ENCODE measurements at regions of chr5 and their contacts with region 1.

Region 1: DNA sequence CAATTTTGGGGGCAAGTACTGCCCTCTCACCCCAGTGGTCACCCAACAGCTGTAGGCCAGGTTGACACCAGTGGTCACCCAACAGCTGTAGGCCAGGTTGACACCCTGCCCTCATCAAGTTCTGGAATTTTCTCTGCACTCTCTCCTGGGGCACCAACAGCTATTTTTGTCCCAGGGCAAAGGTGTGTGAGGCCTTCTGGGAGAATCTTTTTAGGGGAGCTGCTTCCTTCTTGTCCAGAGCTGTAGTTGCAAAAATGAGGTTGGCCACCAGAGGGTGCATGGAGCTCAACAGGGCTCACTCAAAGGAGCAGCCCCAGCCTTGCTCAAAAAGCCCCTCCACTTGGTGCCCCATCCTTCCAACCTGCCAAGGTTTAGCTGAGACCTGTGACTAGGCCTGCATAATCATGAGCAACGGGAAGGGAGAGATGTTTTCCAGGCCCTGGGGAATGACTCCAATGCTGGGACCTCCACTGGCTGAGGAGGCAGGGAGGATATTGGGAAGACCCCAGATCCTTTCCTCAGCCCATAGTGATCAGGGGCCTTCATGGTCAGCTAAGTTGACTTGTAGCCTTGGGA is 10.6 kb upstream of the P4HA2 start:
- DNase-seq: peak in 1 of 2 experiments; percentile 95
- H3K4me3 ChIP-seq: no peak overlapping the region
- H3K27ac ChIP-seq: no peak overlapping the region
- H3K4me1 ChIP-seq: no peaks in the 10 kb centered on the region
- H3K27me3 ChIP-seq: no peaks in the 10 kb centered on the region
- CTCF ChIP-seq: peak; percentile 64 to 85 (median 75)
- EP300 ChIP-seq: no peak
- POLR2A ChIP-seq: no peak
- RAD21 ChIP-seq: peak; percentile 76 to 83

Region 2: DNA sequence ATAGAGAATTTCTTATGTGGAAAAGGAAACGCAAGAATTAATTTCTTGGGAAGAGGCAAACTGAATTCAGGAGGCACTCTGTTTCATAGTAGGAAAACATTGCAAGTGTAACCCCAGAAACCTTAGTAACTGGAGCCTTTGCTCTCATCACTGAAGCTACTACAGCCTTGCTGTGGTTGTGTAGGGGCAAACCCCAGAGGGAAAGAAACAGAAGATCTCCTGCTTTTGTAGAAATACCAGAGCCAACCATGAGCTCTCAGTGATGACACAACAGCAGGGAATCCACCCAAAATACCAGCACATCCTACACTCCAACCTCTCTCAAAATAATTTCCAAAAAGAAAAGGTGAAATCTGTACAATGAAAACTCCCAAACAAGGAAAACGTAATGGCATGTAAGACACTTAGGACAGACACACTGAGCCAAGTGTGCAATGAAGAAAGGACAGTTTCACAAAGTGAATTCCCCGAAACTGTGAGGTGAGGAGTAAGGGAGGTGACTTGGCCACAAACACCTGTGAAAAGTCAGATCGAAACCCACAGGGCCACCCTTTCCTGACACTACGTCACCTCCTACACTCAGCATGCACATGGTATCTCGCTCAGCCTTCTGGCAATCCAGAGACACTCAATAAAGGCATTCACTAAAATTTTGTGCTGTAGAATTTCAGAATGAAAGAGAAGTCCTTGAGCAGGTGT is 218.3 kb before region 1 on chr5:
- CTCF ChIA-PET with region 1: no interaction called
- POLR2A ChIA-PET with region 1: no interaction called
- DNase-seq: no peak
- H3K4me3 ChIP-seq: no peak overlapping the region
- H3K27ac ChIP-seq: no peak overlapping the region
- H3K4me1 ChIP-seq: no peaks in the 10 kb centered on the region
- H3K27me3 ChIP-seq: no peaks in the 10 kb centered on the region
- CTCF ChIP-seq: no peak
- EP300 ChIP-seq: no peak
- POLR2A ChIP-seq: no peak
- RAD21 ChIP-seq: no peak

Region 3: GRCh38 chr5:132064738-132065331 is 173.4 kb before region 1 on chr5:
- CTCF ChIA-PET with region 1: interaction called, 35 read pairs
- POLR2A ChIA-PET with region 1: no interaction called
- DNase-seq: peak; percentile 65 to 97
- H3K4me3 ChIP-seq: no peak overlapping the region
- H3K27ac ChIP-seq: no peak overlapping the region
- H3K4me1 ChIP-seq: no peaks in the 10 kb centered on the region; a peak in 1 of 7 replicates
- H3K27me3 ChIP-seq: no peaks in the 10 kb centered on the region
- CTCF ChIP-seq: peak in 2 of 3 experiments; percentile 88 to 98; a peak in 3 of 4 replicates
- EP300 ChIP-seq: no peak
- POLR2A ChIP-seq: no peak
- RAD21 ChIP-seq: peak; percentile 73 to 80

Region 4: GRCh38 chr5:132162945-132163344 is 75.3 kb before region 1 on chr5:
- CTCF ChIA-PET with region 1: no interaction called
- POLR2A ChIA-PET with region 1: no interaction called
- DNase-seq: no peak
- H3K4me3 ChIP-seq: no peak overlapping the region
- H3K27ac ChIP-seq: no peak overlapping the region
- H3K4me1 ChIP-seq: no peaks in the 10 kb centered on the region
- H3K27me3 ChIP-seq: no peaks in the 10 kb centered on the region
- CTCF ChIP-seq: no peak
- EP300 ChIP-seq: no peak
- POLR2A ChIP-seq: no peak
- RAD21 ChIP-seq: no peak

Region 5: DNA sequence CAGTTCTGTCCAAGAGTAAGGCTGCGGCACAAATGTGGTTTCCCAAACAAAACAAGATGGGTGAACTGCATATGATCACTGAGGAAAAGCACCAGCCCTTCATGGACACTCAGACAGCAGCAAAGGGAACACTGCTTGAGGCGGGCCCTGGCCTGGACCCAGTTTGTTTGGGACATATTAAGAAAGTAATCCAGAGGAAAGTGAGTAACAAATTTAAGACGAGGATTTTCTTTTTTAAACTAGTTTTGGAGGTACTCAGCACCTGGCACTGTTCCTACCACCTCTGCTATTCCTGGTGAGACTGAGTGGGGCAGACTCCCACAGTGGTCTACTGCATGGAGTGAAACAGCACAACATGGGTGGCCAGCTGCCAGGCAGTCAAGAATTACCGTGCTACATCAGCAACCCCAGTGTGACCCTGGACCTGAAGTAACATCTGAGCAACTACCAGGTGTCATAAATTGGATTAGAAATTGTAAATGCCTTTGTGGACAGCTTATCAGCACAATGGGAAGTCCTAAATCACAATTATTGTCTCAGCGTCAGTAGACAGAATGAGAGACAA is 39.1 kb before region 1 on chr5:
- CTCF ChIA-PET with region 1: interaction called, 16 read pairs
- POLR2A ChIA-PET with region 1: no interaction called
- DNase-seq: peak in 1 of 2 experiments; percentile 11
- H3K4me3 ChIP-seq: no peak overlapping the region
- H3K27ac ChIP-seq: no peak overlapping the region
- H3K4me1 ChIP-seq: no peaks in the 10 kb centered on the region
- H3K27me3 ChIP-seq: no peaks in the 10 kb centered on the region
- CTCF ChIP-seq: no peak
- EP300 ChIP-seq: no peak
- POLR2A ChIP-seq: no peak
- RAD21 ChIP-seq: no peak

Region 6: DNA sequence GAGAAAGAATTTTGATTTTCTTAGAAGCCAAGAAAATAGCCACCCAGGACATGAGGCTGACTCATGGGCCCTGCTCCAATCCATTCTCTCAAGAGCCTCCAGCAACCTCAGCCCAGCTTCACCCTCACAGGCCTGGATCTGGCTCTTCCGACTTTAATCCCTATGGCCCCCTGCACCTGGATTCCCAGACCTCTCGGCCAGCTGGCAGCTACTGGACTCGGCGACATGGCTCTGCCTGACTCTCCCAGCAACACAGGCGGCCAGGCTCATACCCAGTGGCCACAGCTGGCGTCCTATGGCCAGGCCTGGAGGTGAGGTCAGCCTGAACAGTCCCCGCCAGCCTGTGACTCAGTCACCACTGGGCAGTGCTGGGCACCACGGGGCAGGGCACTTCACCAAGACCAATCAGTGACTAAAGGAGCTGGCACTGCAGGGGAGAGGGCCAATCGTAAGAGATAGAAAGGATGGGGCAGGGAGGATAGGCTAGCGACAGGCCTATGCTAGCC is 13.0 kb after region 1 on chr5:
- CTCF ChIA-PET with region 1: interaction called, 96 read pairs
- POLR2A ChIA-PET with region 1: interaction called, 4 read pairs
- DNase-seq: no peak
- H3K4me3 ChIP-seq: no peak overlapping the region; a peak in 1 of 8 replicates
- H3K27ac ChIP-seq: no peak overlapping the region
- H3K4me1 ChIP-seq: peaks cover 0 to 5% (median 0%) of the 10 kb centered on the region in 4 experiments; a peak in 1 of 7 replicates
- H3K27me3 ChIP-seq: peaks cover 0 to 4% (median 0%) of the 10 kb centered on the region in 4 experiments; a peak in 1 of 7 replicates
- CTCF ChIP-seq: no peak
- EP300 ChIP-seq: no peak
- POLR2A ChIP-seq: no peak
- RAD21 ChIP-seq: no peak

Region 7: GRCh38 chr5:132277971-132278911 is 40.0 kb after region 1 on chr5:
- CTCF ChIA-PET with region 1: interaction called, 27 read pairs
- POLR2A ChIA-PET with region 1: no interaction called
- DNase-seq: no peak
- H3K4me3 ChIP-seq: no peak overlapping the region; a peak in 1 of 8 replicates
- H3K27ac ChIP-seq: no peak overlapping the region
- H3K4me1 ChIP-seq: peaks cover 0 to 10% (median 5%) of the 10 kb centered on the region in 4 experiments; a peak in 4 of 7 replicates
- H3K27me3 ChIP-seq: no peaks in the 10 kb centered on the region
- CTCF ChIP-seq: no peak
- EP300 ChIP-seq: no peak
- POLR2A ChIP-seq: no peak
- RAD21 ChIP-seq: no peak

Region 8: GRCh38 chr5:132315529-132316083 is 77.3 kb after region 1 on chr5:
- CTCF ChIA-PET with region 1: interaction called, 15 read pairs
- POLR2A ChIA-PET with region 1: no interaction called
- DNase-seq: no peak
- H3K4me3 ChIP-seq: no peak overlapping the region
- H3K27ac ChIP-seq: no peak overlapping the region
- H3K4me1 ChIP-seq: 0 out of 7 replicates have a peak, but pooled peaks cover 0 to 2% (median 0%) of the 10 kb centered on the region in 4 experiments
- H3K27me3 ChIP-seq: no peaks in the 10 kb centered on the region; a peak in 1 of 7 replicates
- CTCF ChIP-seq: peak in 2 of 3 experiments; percentile 30 to 44; a peak in 3 of 4 replicates
- EP300 ChIP-seq: no peak
- POLR2A ChIP-seq: no peak
- RAD21 ChIP-seq: peak; percentile 61 to 67

Region 9: GRCh38 chr5:132591145-132591544 is 352.9 kb after region 1 on chr5:
- CTCF ChIA-PET with region 1: no interaction called
- POLR2A ChIA-PET with region 1: no interaction called
- DNase-seq: no peak
- H3K4me3 ChIP-seq: no peak overlapping the region
- H3K27ac ChIP-seq: no peak overlapping the region
- H3K4me1 ChIP-seq: no peaks in the 10 kb centered on the region
- H3K27me3 ChIP-seq: no peaks in the 10 kb centered on the region
- CTCF ChIP-seq: no peak
- EP300 ChIP-seq: no peak
- POLR2A ChIP-seq: no peak
- RAD21 ChIP-seq: peak; percentile 8 to 23; a peak in 3 of 4 replicates

Measured in H1 (cell line).